CD8-positive, alpha-beta T cell (primary cell): ENCODE measurements at regions of chr14 and their contacts with region 1.

Region 1: DNA sequence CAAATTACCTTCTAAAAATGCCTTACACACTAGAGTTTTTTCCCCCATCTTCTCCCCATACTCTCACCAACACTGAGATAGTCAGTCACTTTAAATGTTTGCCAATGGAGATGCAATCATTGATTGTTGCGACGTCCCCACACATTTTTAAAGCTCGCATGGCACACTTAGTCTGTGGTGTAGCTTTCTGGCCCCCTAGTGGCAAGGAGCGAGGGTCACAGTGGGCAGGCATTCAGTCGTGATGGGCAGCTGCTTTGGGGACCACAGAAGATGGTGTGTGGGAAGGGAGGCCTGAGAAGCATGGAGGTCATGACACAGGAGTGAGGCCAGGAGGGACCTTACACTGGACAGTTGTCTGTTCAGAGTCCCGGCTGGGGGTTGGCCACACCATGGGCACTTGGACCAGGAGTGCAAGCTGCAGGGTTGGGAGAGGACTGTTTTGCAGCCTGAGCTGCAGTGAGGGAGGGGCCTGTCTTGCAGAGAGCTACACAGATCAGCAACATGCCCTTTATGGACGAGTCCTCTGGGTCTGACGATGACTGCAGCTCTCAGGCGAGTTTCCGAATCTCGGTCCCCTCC is 28.7 kb downstream of the PIGH start:
- DNase-seq: peak; percentile 38 to 81 (median 70)
- ATAC-seq: peak; percentile 91
- H3K4me3 ChIP-seq: no peak overlapping the region
- H3K4me3 Mint-ChIP-seq: no peak overlapping the region
- H3K27ac ChIP-seq: no peak overlapping the region
- H3K27ac Mint-ChIP-seq: no peak overlapping the region
- H3K4me1 ChIP-seq: no peaks in the 10 kb centered on the region
- H3K4me1 Mint-ChIP-seq: no peaks in the 10 kb centered on the region
- H3K27me3 ChIP-seq: no peaks in the 10 kb centered on the region
- H3K27me3 Mint-ChIP-seq: peaks cover 6% of the 10 kb centered on the region
- CTCF ChIP-seq: peak; percentile 74

Region 2: GRCh38 chr14:66359500-66359899 is 1211.9 kb before region 1 on chr14:
- CTCF ChIA-PET with region 1: no interaction called
- POLR2A ChIA-PET with region 1: no interaction called
- intact Hi-C with region 1: loop called in 1 of 2 experiments (anchors 5 kb)
- DNase-seq: peak in 4 of 9 experiments; percentile 2 to 78 (median 50)
- ATAC-seq: peak; percentile 51
- H3K4me3 ChIP-seq: no peak overlapping the region
- H3K4me3 Mint-ChIP-seq: no peak overlapping the region
- H3K27ac ChIP-seq: no peak overlapping the region
- H3K27ac Mint-ChIP-seq: no peak overlapping the region
- H3K4me1 ChIP-seq: no peaks in the 10 kb centered on the region
- H3K4me1 Mint-ChIP-seq: no peaks in the 10 kb centered on the region
- H3K27me3 ChIP-seq: no peaks in the 10 kb centered on the region
- H3K27me3 Mint-ChIP-seq: no peaks in the 10 kb centered on the region
- CTCF ChIP-seq: peak; percentile 75

Region 3: DNA sequence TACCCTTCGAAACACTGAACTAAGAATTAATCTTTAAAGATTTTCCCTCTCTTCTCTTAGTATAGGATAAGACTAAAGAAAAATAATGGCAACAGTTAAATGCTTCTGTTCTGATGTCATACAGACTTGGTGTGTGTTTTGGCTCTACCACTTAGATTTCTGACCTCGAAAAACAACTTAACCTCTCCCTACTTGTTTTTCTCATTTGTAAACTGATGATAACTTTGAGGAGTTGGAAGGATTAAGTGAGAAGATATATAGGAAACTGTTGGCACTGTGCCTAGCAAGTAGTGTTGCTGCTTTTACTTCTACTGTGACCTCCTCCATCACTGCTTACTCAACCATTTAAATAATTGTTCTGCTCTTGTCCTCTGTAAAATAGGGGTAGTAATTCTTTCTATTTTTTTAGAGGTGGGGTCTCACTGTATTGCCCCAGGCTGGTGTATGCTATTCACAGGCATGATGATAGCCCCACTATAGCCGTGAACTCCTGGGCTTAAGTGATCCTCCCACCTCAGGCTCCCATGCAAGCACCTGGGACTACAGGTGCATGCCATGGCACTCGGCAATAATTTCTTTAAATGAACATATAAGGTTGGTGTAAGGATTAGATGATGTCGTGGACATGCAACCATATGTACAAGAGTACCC is 307.7 kb before region 1 on chr14:
- CTCF ChIA-PET with region 1: no interaction called
- POLR2A ChIA-PET with region 1: no interaction called
- intact Hi-C with region 1: no loop called
- DNase-seq: no peak
- ATAC-seq: no peak
- H3K4me3 ChIP-seq: no peak overlapping the region
- H3K4me3 Mint-ChIP-seq: no peak overlapping the region
- H3K27ac ChIP-seq: no peak overlapping the region
- H3K27ac Mint-ChIP-seq: no peak overlapping the region
- H3K4me1 ChIP-seq: no peaks in the 10 kb centered on the region
- H3K4me1 Mint-ChIP-seq: peaks cover 17% of the 10 kb centered on the region
- H3K27me3 ChIP-seq: no peaks in the 10 kb centered on the region
- H3K27me3 Mint-ChIP-seq: no peaks in the 10 kb centered on the region
- CTCF ChIP-seq: no peak

Region 4: DNA sequence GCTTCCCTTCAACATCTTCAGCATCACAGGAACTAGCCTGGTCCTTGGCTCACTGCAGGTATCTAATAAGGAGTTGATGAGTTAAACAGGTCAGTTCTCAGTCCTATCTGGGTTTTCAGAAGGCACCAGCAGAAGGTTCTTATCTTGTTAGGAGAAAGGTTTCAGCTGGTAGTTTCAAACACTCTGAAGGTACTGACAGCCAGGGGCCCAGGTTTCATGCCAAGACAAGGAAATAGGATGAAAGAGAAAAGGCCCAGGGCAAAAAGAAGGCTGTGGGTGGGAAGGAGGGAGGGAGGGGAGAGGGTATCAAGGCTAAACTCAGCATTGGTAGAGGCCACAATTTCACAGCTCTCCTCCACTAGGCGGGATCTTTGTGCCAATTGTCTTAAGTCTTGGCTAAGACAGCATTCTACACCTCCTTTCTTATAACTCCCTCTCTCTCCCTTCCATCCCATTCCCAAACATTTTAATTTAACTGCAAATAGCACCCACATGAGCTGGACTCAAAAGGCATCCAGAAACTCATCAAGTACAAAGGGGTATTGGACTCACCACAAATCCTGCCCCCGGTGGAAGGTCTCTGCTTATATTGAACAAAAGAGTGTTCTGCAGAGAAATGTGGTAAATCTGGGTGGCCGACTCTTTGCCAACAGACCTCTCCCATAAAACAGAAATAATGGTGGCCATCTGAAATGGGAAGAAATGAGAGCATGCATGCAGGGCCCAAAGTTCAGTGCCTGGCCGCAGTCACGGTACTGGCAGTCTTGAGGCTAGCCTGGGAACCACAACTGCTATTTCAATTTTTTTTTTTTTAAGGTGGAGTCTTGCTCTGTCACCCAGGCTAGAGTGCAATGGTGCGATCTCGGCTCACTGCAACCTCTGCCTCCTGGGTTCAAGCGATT is 103.9 kb before region 1 on chr14:
- CTCF ChIA-PET with region 1: interaction called, 24 read pairs
- POLR2A ChIA-PET with region 1: no interaction called
- intact Hi-C with region 1: no loop called
- DNase-seq: peak in 2 of 9 experiments; percentile 33 to 45
- ATAC-seq: peak; percentile 44
- H3K4me3 ChIP-seq: no peak overlapping the region
- H3K4me3 Mint-ChIP-seq: no peak overlapping the region
- H3K27ac ChIP-seq: no peak overlapping the region
- H3K27ac Mint-ChIP-seq: no peak overlapping the region
- H3K4me1 ChIP-seq: peaks cover 42% of the 10 kb centered on the region
- H3K4me1 Mint-ChIP-seq: peaks cover 46% of the 10 kb centered on the region
- H3K27me3 ChIP-seq: no peaks in the 10 kb centered on the region
- H3K27me3 Mint-ChIP-seq: no peaks in the 10 kb centered on the region
- CTCF ChIP-seq: no peak

Region 5: DNA sequence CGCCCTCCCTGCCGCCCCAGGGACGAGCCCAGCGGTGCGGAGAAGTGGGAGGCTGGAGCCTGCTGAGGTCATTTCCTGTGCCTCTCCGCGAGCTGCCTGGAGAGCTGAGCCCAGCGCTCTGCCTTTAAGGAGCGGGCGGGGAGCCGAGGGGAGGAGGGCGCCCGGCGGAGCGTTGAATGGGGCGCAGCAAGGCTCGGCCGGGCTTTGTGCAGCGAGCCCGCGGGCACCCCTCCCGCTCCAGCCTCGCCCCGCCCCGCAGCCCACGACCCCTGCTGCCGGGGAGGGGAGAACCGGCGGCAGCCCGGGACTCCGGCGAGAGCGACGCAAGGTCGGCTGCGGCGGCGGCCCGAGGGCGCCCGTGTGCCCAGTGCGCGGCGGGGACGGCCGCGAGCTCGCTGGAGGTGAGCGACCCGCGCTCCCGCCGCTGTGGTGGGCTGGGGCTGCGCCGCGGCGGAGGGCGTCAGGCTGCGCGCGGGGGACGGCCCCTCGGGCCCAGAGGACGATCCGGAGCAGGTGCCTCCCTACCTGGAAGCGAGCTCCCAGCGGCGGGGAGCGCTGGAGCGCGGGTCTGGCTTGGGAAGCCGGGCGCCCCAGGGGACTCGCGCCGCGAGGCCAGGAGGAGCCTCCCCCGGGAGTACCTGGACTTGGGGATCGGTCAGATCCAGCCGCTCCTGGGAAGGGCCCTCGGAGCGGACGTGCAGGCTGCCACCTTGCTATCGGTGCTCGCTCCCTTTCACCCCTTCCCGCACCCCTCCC is 38.2 kb before region 1 on chr14 and contains the start of gene PLEKHH1:
- CTCF ChIA-PET with region 1: interaction called, 84 read pairs
- POLR2A ChIA-PET with region 1: no interaction called
- intact Hi-C with region 1: no loop called
- DNase-seq: peak in 7 of 9 experiments; percentile 11 to 66 (median 51)
- ATAC-seq: peak; percentile 80
- H3K4me3 ChIP-seq: peak within 1 kb of the TSS; percentile 24 to 53
- H3K4me3 Mint-ChIP-seq: peak within 1 kb of the TSS; percentile 80
- H3K27ac ChIP-seq: no peak within 1 kb of the TSS
- H3K27ac Mint-ChIP-seq: no peak within 1 kb of the TSS
- H3K4me1 ChIP-seq: peaks cover 5% of the 10 kb centered on the region
- H3K4me1 Mint-ChIP-seq: peaks cover 7% of the 10 kb centered on the region
- H3K27me3 ChIP-seq: no peaks in the 10 kb centered on the region
- H3K27me3 Mint-ChIP-seq: peaks cover 22% of the 10 kb centered on the region
- CTCF ChIP-seq: no peak
- total RNA-seq, gene PLEKHH1: 0.28 to 0.54 TPM

Region 6: GRCh38 chr14:67583711-67584644 is 12.6 kb after region 1 on chr14:
- CTCF ChIA-PET with region 1: interaction called, 85 read pairs
- POLR2A ChIA-PET with region 1: no interaction called
- intact Hi-C with region 1: no loop called
- DNase-seq: peak in 4 of 9 experiments; percentile 26 to 61 (median 40)
- ATAC-seq: peak; percentile 61
- H3K4me3 ChIP-seq: no peak overlapping the region
- H3K4me3 Mint-ChIP-seq: no peak overlapping the region
- H3K27ac ChIP-seq: no peak overlapping the region
- H3K27ac Mint-ChIP-seq: no peak overlapping the region
- H3K4me1 ChIP-seq: no peaks in the 10 kb centered on the region
- H3K4me1 Mint-ChIP-seq: no peaks in the 10 kb centered on the region
- H3K27me3 ChIP-seq: no peaks in the 10 kb centered on the region
- H3K27me3 Mint-ChIP-seq: no peaks in the 10 kb centered on the region
- CTCF ChIP-seq: peak; percentile 51

Region 7: DNA sequence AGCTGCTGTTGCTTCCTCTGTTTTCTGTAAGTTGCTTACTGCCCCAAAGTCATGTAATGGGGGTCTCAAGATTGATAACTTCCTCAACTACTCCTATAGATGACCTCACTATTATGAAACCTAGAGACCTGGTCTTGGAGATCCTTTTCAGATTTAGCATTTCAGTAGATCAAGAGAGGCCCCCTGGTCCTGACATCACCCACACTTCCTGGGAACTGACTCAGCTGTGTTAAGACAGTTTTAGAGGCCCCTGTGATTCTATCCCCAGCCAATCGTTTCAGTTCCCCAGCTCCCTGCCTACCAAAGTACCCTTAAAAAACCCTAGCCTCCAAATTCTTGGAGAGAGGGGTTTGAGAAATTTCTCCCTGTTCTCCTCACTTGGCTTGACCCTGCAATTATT is 39.1 kb after region 1 on chr14:
- CTCF ChIA-PET with region 1: no interaction called
- POLR2A ChIA-PET with region 1: no interaction called
- intact Hi-C with region 1: no loop called
- DNase-seq: no peak
- ATAC-seq: no peak
- H3K4me3 ChIP-seq: no peak overlapping the region
- H3K4me3 Mint-ChIP-seq: no peak overlapping the region
- H3K27ac ChIP-seq: no peak overlapping the region
- H3K27ac Mint-ChIP-seq: no peak overlapping the region
- H3K4me1 ChIP-seq: no peaks in the 10 kb centered on the region
- H3K4me1 Mint-ChIP-seq: no peaks in the 10 kb centered on the region
- H3K27me3 ChIP-seq: no peaks in the 10 kb centered on the region
- H3K27me3 Mint-ChIP-seq: peaks cover 10% of the 10 kb centered on the region
- CTCF ChIP-seq: no peak

Region 8: DNA sequence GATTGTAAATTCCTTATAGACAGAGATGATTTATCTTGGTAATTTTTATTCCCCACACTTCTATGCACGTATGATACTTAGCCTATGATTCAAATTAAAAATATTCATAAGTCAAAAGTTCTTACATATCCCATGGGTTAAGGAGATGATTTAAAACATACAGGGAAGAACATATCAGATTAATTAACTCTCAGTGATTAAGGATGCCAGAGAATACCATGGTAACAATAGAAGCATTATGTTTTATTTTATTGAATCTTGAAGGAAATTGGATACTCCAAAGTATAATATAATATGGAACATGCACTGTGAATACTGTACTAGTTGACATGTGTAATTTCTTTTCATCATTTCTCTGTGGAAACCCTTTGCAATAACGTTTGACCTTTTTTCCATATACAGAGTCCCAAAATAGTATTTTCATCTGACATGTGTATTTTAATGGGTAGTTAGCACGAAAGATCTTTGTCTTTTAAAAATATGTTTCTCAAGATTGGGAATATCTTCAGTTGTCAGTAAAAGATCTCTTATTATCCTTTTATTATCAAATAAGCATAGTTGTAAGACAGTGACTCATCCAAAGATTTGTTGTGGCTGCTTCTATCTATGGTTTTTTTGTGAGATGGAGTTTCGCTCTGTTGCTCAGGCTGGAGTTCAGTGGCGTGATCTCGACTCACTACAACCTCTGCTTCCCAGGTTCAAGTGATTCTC is 414.9 kb after region 1 on chr14:
- CTCF ChIA-PET with region 1: no interaction called
- POLR2A ChIA-PET with region 1: no interaction called
- intact Hi-C with region 1: no loop called
- DNase-seq: no peak
- ATAC-seq: no peak
- H3K4me3 ChIP-seq: no peak overlapping the region
- H3K4me3 Mint-ChIP-seq: no peak overlapping the region
- H3K27ac ChIP-seq: no peak overlapping the region
- H3K27ac Mint-ChIP-seq: no peak overlapping the region
- H3K4me1 ChIP-seq: no peaks in the 10 kb centered on the region
- H3K4me1 Mint-ChIP-seq: no peaks in the 10 kb centered on the region
- H3K27me3 ChIP-seq: no peaks in the 10 kb centered on the region
- H3K27me3 Mint-ChIP-seq: no peaks in the 10 kb centered on the region
- CTCF ChIP-seq: no peak